ENCODE measurements at regions of chr14 and their contacts with region 1.

Region 1: GRCh38 chr14:34461334-34462131 is 507 bp downstream of the SPTSSA start:
- DNase-seq: peak; percentile 80
- H3K4me3 Mint-ChIP-seq: peak overlapping the region; percentile 92
- H3K27ac Mint-ChIP-seq: peak overlapping the region; percentile 93
- H3K4me1 Mint-ChIP-seq: peaks cover 19% of the 10 kb centered on the region
- H3K27me3 Mint-ChIP-seq: no peaks in the 10 kb centered on the region

Region 2: DNA sequence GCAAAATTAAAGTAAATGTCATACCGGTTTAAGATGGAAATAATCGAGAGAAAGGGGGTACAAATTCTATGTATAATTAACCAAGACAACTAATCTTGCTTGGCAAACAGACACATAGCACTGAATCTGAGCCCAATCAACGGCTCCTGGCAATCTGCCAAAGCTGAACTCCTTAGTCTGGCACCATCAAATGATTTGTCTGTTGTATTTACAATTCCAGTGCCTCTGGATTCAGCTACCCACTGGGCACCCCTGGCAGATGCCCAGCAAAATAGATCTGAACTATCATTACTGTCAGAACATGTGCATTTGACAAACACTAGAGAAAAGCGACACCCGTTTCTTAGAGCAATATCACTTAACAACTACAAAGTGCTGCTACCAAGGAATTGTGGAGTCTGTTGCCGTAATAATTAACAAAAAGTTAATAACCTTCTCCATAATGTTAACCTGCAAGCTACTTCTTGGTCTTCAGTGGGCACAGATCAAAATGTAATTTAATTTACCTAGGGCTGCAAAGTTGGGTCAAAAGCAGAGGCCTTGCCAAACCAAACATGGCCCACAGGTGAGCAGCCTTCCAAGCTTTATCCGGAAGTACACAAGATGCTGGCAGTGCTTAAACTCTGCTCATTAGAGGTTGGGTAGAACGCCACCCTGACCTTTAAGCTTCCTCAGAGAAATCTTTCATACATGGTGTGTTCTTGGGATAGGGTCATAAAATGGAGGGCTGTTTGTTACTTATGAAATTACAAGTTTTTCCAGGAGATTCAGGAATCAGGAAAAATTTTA is 518.2 kb before region 1 on chr14:
- intact Hi-C with region 1: loop called (anchors 10 kb)
- DNase-seq: no peak
- H3K4me3 Mint-ChIP-seq: no peak overlapping the region
- H3K27ac Mint-ChIP-seq: no peak overlapping the region
- H3K4me1 Mint-ChIP-seq: peaks cover 44% of the 10 kb centered on the region
- H3K27me3 Mint-ChIP-seq: peaks cover 17% of the 10 kb centered on the region